PC-3 (cell line): ENCODE measurements at regions of chr18 and their contacts with region 1.

Region 1: DNA sequence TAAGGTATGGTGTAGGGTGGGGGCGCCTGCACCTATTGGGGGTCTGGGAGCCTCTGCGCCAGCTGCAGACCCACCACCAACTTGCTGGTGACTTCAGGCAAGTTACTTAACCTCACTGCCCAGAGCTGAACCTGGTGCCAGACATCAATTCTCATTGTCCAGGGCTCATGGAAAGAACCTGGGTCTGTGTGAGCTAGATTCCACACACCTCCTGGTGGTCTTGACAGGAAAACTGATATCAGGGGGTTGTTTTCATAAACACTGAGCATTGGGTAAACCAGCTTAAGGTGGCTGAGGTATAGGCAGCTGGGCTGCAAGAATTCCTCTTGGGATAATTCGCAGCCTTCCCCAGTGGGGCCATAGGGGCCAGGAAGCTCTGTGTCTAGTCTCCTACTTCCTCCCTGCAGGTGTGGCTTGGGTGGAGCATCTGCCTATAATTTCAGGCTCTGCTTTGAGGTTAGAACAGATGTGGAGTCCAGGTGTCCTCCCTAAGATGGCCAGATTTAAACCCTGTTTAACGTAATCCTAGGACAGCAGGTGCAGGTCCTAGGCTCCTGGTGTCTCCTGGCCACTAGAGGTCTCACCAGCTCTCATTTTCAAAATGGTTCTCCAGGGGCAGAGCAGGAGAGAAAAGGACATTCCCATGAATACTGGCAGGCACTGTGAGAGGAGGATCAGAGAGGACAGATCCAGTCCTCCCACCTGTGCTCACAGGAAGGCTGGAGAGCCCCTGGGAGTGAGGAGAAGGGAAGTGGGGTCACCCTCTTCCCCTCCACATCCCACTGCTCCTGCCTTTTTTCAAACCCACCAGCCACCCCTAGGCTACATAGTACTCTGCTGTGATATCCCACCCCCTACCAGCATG is 100.4 kb upstream of the SMAD2 start:
- DNase-seq: peak; percentile 59
- ATAC-seq: peak; percentile 89
- H3K4me3 ChIP-seq: no peak overlapping the region
- H3K27ac ChIP-seq: no peak overlapping the region
- H3K4me1 ChIP-seq: peaks cover 9% of the 10 kb centered on the region; the same call in 1 of the 2 replicates
- H3K27me3 ChIP-seq: no peaks in the 10 kb centered on the region
- CTCF ChIP-seq: peak; percentile 63

Region 2: GRCh38 chr18:48072428-48073204 is 41.8 kb after region 1 on chr18:
- CTCF ChIA-PET with region 1: no interaction called
- POLR2A ChIA-PET with region 1: no interaction called
- intact Hi-C with region 1: no loop called
- DNase-seq: no peak
- ATAC-seq: no peak
- H3K4me3 ChIP-seq: no peak overlapping the region
- H3K27ac ChIP-seq: no peak overlapping the region
- H3K4me1 ChIP-seq: no peaks in the 10 kb centered on the region
- H3K27me3 ChIP-seq: no peaks in the 10 kb centered on the region
- CTCF ChIP-seq: no peak

Region 3: DNA sequence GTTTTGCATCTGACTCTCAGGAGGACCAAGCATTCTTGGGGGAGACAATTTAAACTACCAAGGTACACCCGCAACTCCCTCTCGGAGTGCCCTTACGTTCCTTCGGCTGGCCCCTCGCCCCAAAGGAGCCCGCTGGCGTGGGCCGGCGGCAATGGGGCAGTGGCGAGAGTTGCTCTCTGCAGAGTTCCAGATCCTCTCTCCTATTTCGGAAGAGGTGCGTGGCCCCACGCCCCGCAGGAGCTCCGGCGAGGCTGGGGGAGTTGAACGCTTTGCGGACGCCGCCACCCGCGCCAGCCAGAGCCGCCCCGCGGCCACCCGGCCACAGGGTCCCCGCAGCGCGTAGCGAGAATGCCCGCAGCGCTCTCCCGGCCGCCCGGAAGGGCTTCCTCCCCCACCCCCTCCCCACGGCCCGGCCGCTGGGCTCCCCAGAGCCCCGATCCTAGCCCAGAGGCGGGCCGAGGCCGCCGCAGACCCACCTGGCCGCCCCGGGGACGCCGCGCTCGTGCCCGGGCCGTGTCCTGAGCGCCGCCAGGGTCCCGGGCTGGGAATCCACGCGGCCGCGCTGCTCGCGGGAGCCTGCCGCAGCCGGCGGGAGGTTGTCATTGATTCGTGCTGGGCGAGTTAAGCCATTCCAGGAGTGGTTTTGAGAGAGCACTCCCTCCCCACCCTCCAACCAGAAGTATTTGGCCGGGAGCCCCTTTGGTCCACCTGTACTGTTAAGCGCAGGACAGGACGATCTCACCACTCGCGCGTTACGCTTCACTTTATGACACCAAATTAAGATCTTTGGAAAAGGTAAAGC is 105.9 kb after region 1 on chr18:
- CTCF ChIA-PET with region 1: no interaction called
- POLR2A ChIA-PET with region 1: no interaction called
- intact Hi-C with region 1: loop called (anchors 10 kb)
- DNase-seq: no peak
- ATAC-seq: peak; percentile 13
- H3K4me3 ChIP-seq: peak overlapping the region; percentile 67
- H3K27ac ChIP-seq: peak overlapping the region; percentile 50
- H3K4me1 ChIP-seq: peaks cover 31% of the 10 kb centered on the region
- H3K27me3 ChIP-seq: no peaks in the 10 kb centered on the region
- CTCF ChIP-seq: no peak

Region 4: GRCh38 chr18:48230467-48231113 is 199.7 kb after region 1 on chr18:
- CTCF ChIA-PET with region 1: no interaction called
- POLR2A ChIA-PET with region 1: no interaction called
- intact Hi-C with region 1: loop called (anchors 5 kb)
- DNase-seq: peak; percentile 48
- ATAC-seq: peak; percentile 68
- H3K4me3 ChIP-seq: no peak overlapping the region
- H3K27ac ChIP-seq: no peak overlapping the region
- H3K4me1 ChIP-seq: peaks cover 13% of the 10 kb centered on the region
- H3K27me3 ChIP-seq: no peaks in the 10 kb centered on the region
- CTCF ChIP-seq: peak; percentile 61; the same call in 1 of the 2 replicates

Region 5: GRCh38 chr18:48345596-48345995 is 314.7 kb after region 1 on chr18:
- CTCF ChIA-PET with region 1: no interaction called
- POLR2A ChIA-PET with region 1: no interaction called
- intact Hi-C with region 1: loop called (anchors 1 kb)
- DNase-seq: peak; percentile 26
- ATAC-seq: peak; percentile 48
- H3K4me3 ChIP-seq: no peak overlapping the region
- H3K27ac ChIP-seq: no peak overlapping the region
- H3K4me1 ChIP-seq: no peaks in the 10 kb centered on the region
- H3K27me3 ChIP-seq: no peaks in the 10 kb centered on the region
- CTCF ChIP-seq: peak; percentile 50; the same call in 1 of the 2 replicates

Region 6: DNA sequence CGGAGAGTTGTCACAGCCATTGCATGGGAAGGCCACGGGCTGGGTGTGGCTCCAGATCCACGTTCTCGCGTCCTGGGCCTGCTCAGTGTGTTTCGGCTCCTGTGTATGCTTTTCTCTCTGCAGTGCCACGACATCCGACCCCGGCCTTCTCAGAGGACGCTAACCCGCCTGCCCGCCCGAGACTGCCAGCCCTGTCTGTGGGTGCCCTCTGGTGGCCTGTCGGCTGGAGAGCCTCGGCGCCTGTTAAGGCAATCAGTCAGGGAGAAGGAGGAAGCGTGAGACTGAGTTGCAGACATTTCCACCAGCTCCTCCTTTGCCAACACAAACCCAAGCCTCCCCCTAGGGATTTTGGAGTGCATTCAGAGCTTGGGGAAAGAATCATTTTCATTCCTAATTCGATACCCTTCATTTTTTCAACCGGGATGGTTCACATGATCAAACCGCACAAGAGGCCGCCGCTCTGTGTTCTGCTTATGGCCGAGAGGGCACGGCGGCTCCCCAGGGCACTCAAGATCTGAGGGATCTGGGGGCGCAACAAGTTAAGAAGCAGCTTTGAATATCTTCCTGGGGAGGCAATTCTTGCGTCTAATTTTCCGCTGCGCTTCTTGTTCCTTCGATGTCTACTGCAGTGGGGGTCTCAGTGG is 415.9 kb after region 1 on chr18:
- CTCF ChIA-PET with region 1: no interaction called
- POLR2A ChIA-PET with region 1: no interaction called
- intact Hi-C with region 1: loop called (anchors 1 kb)
- DNase-seq: peak; percentile 52
- ATAC-seq: peak; percentile 94
- H3K4me3 ChIP-seq: no peak overlapping the region
- H3K27ac ChIP-seq: no peak overlapping the region
- H3K4me1 ChIP-seq: no peaks in the 10 kb centered on the region
- H3K27me3 ChIP-seq: no peaks in the 10 kb centered on the region
- CTCF ChIP-seq: peak; percentile 71